Activated naive CD4-positive, alpha-beta T cell treated with anti-CD3 and anti-CD28 coated beads, Interleukin-2, amount 10 ng/mL, durations not matched to agents 7 days and 5 days (primary cell): ENCODE measurements at regions of chr17 and their contacts with region 1.

Region 1: DNA sequence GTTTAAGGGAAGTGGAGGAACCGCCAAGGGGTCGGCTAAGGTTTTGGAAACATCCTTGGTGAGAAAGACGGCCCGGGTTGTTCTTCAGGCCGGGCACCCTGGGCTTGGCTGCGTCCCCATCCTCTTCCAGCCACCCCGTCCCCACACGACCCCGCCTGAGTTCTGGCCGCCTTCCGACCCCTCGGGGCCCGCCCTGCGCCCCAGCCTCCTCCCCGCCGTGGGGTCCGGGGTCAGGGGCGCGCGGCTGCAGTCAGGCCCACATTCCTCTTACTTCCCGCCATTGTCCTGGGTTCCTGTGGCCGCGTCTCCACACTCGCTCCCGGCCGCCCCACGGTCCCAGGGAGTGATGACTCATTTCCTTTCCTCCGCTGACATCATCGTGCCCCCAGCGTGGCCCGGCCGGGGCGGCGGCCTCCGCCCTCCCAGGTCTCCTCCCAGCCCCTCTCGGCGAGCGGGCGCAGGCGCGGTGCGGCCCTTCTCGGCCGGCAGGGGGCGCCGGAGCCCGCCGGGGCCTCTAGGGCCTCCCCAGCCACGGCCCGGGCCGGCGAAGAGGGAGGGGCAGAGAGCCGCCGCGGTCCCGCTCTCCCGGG is 59.6 kb downstream of the WSB1 start:
- DNase-seq: peak; percentile 88
- H3K4me3 Mint-ChIP-seq: peak overlapping the region; percentile 76
- H3K27ac Mint-ChIP-seq: peak overlapping the region; percentile 83
- H3K4me1 Mint-ChIP-seq: peaks cover 35% of the 10 kb centered on the region
- H3K27me3 Mint-ChIP-seq: no peaks in the 10 kb centered on the region

Region 2: DNA sequence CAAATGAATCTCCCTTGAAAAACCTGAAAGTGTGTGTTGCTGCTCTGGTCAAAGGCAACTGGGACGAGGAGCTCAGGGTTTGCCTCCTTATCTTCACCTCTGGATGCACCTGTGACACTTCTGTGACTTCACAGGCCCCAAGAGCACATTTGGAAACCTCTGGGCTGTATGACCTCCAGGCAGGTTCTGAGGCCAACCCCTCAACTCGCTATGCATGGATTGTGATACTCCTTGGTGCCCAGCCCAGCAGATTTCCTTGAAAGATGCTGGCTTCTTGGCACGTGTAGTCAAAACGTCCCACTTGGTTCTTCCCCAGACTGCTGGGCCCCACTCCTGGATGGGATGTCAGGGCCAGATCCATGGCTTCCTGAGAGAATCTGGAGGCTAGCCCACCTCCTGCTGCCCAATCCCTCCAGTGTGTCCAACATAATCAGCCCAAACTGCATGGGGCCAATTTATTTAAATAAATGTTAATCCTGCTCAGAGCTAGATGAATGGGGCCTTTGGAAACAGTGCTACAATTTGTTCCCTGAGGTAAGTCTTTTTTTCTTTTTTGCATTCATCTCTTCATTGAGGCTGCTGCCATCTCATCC is 10.4 kb before region 1 on chr17:
- CTCF ChIA-PET with region 1: no interaction called
- DNase-seq: no peak
- H3K4me3 Mint-ChIP-seq: no peak overlapping the region
- H3K27ac Mint-ChIP-seq: no peak overlapping the region
- H3K4me1 Mint-ChIP-seq: peaks cover 16% of the 10 kb centered on the region
- H3K27me3 Mint-ChIP-seq: peaks cover 16% of the 10 kb centered on the region

Region 3: DNA sequence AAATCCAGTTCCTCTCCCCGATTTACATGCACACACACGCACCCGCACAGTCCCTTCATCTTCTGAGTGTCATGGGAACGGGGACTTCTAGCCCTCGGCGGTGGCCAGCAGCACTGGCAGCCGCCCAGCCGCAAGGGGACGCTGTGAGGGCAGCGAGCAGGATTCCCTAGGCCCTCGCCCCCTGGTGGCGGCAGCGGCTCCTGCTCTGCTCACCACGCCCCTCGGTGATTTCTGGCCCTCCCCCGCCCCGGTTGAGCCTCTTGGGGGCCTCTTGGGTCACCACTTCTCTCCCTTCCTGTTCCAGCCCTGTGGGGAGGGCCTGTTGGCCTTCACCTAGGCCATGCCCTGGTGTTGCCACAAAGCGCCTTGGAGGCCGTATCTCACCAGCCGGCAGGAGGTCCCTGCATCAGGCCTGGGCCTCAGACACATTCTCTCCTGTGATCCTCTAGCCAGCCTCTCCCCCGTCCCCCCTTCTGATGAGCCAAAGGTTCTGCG is 27.5 kb after region 1 on chr17:
- CTCF ChIA-PET with region 1: interaction called, 25 read pairs
- DNase-seq: peak; percentile 85
- H3K4me3 Mint-ChIP-seq: no peak overlapping the region
- H3K27ac Mint-ChIP-seq: no peak overlapping the region
- H3K4me1 Mint-ChIP-seq: no peaks in the 10 kb centered on the region
- H3K27me3 Mint-ChIP-seq: peaks cover 65% of the 10 kb centered on the region